AG04450 (cell line): ENCODE measurements at regions of chr11 and their contacts with region 1.

Region 1: GRCh38 chr11:61733120-61733978 is 19.1 kb upstream of the MYRF start:
- DNase-seq: peak; percentile 44
- H3K4me3 ChIP-seq: no peak overlapping the region
- H3K27ac ChIP-seq: no peak overlapping the region
- H3K27me3 ChIP-seq: no peaks in the 10 kb centered on the region
- CTCF ChIP-seq: peak; percentile 99

Region 2: DNA sequence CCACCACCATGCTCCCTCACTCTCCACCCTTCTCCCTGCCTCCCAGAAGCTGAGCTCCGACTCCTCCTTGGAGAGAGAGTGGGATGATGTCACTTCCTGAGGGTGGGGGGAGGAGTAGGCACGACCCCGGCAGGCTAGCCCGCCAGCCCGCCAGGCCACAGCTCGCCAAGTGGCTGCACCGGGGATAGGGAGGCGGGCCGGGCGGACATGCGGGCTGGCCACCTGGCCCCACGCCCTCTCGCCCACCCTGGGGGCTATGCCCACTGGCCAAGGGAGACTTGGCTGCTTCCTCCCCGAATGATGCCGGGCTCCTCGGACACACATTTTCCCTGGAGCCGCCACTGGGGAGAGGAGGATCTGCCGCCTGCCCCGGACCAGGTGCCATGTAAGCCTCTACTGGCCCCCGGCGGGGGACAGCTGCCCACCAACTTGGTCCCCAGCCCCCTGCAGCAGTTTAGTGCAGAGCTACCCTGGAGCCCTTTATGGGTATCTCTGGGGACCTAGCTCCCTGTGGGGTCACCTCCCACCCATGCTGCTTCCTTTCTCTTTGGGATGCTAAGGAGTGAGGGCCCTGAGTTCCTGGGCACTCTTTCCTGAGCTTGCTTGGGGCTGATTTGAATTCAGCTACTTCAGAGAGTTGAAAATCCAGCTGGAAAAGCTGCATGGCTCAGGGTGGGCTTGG is 14.6 kb before region 1 on chr11:
- CTCF ChIA-PET with region 1: interaction called, 18 read pairs
- POLR2A ChIA-PET with region 1: interaction called, 10 read pairs
- DNase-seq: peak; percentile 38
- H3K4me3 ChIP-seq: peak overlapping the region; percentile 65
- H3K27ac ChIP-seq: peak overlapping the region; percentile 39
- H3K27me3 ChIP-seq: peaks cover 13% of the 10 kb centered on the region
- CTCF ChIP-seq: no peak

Region 3: DNA sequence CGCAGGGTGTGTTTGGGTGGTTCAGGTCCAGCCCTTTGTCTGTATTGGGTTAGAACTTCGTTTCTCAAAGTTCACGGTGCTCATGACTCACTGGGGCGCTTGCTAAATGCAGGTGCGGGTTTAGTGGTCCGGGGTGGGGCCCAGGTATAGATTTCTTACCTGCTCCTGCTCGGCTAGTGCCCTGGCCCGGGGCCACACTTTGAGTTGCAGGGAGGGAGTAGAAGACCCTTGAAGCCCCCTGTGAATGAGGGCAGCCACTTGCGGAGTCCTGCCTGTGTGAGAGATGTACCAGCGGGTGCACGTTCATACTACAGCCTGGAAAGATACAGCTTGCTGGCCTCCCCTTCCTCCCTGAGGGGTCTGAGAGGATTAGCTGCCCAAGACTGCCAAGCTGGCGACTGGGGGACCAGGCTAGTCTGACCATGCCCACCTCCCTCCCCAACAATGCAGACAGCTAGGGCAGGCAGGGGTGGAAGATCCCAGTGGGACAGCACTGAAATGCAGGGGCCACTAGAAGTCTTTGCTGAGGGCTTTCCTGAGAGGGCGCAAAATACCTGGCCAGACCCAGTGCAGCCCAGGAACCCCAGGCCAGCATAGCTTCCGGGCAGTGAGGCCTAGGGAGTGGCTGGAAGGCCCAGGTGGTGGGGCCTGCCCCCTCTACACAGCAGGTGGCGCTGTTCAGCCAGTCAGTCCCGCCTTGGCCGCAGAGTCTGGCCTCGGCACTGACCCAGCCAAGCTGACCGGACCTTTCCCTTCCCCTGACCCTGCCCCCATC is 14.0 kb after region 1 on chr11:
- CTCF ChIA-PET with region 1: interaction called, 54 read pairs
- POLR2A ChIA-PET with region 1: interaction called, 7 read pairs
- DNase-seq: no peak
- H3K4me3 ChIP-seq: no peak overlapping the region
- H3K27ac ChIP-seq: no peak overlapping the region
- H3K27me3 ChIP-seq: no peaks in the 10 kb centered on the region
- CTCF ChIP-seq: peak; percentile 93